ENCODE measurements at regions of chr20 and their contacts with region 1.

Region 1: GRCh38 chr20:31670371-31671228 is 32.9 kb downstream of the COX4I2 start:
- DNase-seq: peak in 1 of 2 donors; percentile 89
- H3K4me3 ChIP-seq: peak overlapping the region in 1 of 2 donors; percentile 30
- H3K27ac ChIP-seq: peak overlapping the region; percentile 89 to 95
- H3K4me1 ChIP-seq: peaks cover 36 to 98% of the 10 kb centered on the region in 2 donors
- H3K27me3 ChIP-seq: no peaks in the 10 kb centered on the region
- CTCF ChIP-seq: no peak

Region 2: DNA sequence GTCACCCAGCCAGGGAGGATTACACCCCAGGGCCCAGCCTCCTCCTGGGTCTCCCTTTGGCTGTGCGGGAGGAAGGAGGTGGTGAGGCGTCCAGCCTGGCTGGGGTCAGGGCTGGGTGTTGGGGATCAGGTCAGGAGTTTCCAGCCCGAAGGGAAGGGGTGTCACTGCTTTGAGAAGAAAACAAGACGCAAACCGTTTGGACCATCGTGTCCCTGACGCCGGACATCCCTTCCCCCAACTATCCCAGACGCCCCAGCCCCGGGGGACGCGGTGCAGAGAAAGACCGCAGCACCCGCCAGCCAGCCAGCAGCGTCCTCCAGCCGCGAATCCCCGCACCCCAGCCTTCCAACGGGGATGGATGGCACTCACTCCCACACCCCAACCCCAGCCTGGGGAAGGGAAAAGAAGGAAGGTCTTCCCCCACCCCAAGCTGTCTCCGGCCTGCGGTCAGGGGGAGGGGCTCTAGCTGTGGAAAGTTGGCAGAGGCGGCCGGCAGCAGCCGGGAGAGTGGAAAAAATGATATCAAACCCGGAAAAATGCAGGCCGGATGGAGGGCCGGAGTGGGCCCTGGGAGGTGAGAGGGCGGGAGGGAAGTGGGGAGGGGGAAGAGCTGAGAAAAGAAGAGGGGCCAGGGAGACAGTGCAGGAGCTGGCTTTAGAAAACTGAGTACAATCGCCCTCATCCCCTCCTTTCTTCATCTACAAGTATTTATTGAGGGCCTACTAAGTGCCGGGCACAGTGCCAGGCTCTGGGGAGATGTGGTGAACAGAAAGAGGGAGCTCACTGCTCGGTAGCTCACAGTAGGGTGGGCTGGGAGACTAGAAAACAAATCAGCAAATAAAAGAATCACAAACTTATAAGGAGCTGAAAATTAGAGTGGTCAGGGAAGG is 184.9 kb before region 1 on chr20:
- intact Hi-C with region 1: no loop called
- DNase-seq: peak; percentile 23 to 80
- H3K4me3 ChIP-seq: peak overlapping the region in 1 of 2 donors; percentile 60
- H3K27ac ChIP-seq: peak overlapping the region; percentile 89 to 90
- H3K4me1 ChIP-seq: peaks cover 3 to 14% of the 10 kb centered on the region in 2 donors
- H3K27me3 ChIP-seq: no peaks in the 10 kb centered on the region
- CTCF ChIP-seq: no peak

Region 3: GRCh38 chr20:31653561-31653960 is 17.0 kb before region 1 on chr20:
- intact Hi-C with region 1: no loop called
- DNase-seq: no peak
- H3K4me3 ChIP-seq: no peak overlapping the region
- H3K27ac ChIP-seq: no peak overlapping the region
- H3K4me1 ChIP-seq: no peaks in the 10 kb centered on the region
- H3K27me3 ChIP-seq: no peaks in the 10 kb centered on the region
- CTCF ChIP-seq: no peak

Region 4: GRCh38 chr20:31698803-31699718 is 28.5 kb after region 1 on chr20:
- intact Hi-C with region 1: loop called (anchors 2 kb)
- DNase-seq: peak; percentile 69 to 91
- H3K4me3 ChIP-seq: no peak overlapping the region
- H3K27ac ChIP-seq: peak overlapping the region; percentile 86 to 96
- H3K4me1 ChIP-seq: peaks cover 19 to 61% of the 10 kb centered on the region in 2 donors
- H3K27me3 ChIP-seq: no peaks in the 10 kb centered on the region
- CTCF ChIP-seq: no peak

Region 5: DNA sequence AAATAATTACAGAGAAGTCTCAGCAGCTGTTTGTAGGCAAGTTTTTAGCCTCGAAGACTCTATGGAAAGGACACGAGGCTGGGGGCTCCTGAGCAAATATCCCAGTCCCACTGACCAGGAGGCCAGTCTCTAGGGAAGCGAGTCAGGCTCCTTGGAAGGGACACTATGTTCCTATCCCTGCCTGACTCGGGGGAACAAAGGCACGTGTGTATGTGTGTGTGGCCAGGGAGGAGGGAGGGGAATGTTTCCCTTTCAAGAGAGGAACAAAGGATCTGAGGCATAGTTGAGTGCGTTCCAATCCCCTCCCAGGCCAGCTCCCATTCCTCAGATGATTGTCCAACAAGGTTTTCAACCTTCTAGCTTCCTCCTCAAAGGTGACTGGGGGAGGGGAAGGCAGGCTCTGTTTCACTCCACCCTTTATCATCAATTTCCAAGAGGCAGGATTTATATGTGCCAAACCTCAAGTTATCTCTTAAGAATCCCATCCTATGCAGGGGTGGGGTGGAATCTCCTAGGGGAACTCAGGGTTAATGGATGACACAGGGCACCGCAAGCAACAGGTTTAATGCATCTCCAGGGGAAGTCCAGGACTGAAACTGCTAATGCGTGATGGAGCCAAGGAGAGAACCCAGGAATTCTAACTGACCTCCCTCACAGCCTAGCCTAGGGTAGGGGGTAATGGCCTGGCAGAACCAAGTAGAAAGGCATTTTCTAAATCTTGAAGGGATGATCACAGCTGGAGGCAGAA is 42.1 kb after region 1 on chr20:
- intact Hi-C with region 1: loop called (anchors 1 kb)
- DNase-seq: peak; percentile 87 to 98
- H3K4me3 ChIP-seq: peak overlapping the region; percentile 18 to 53
- H3K27ac ChIP-seq: peak overlapping the region; percentile 95 to 98
- H3K4me1 ChIP-seq: peaks cover 28 to 81% of the 10 kb centered on the region in 2 donors
- H3K27me3 ChIP-seq: no peaks in the 10 kb centered on the region
- CTCF ChIP-seq: no peak

Region 6: GRCh38 chr20:31811796-31812728 is 141.5 kb after region 1 on chr20:
- intact Hi-C with region 1: loop called (anchors 1 kb)
- DNase-seq: no peak
- H3K4me3 ChIP-seq: no peak overlapping the region
- H3K27ac ChIP-seq: peak overlapping the region; percentile 88 to 91
- H3K4me1 ChIP-seq: peaks cover 36 to 79% of the 10 kb centered on the region in 2 donors
- H3K27me3 ChIP-seq: no peaks in the 10 kb centered on the region
- CTCF ChIP-seq: no peak

Measured in ascending aorta (tissue), 2 donors.